CD4-positive, alpha-beta T cell (primary cell): ENCODE measurements at regions of chr22 and their contacts with region 1.

Region 1: DNA sequence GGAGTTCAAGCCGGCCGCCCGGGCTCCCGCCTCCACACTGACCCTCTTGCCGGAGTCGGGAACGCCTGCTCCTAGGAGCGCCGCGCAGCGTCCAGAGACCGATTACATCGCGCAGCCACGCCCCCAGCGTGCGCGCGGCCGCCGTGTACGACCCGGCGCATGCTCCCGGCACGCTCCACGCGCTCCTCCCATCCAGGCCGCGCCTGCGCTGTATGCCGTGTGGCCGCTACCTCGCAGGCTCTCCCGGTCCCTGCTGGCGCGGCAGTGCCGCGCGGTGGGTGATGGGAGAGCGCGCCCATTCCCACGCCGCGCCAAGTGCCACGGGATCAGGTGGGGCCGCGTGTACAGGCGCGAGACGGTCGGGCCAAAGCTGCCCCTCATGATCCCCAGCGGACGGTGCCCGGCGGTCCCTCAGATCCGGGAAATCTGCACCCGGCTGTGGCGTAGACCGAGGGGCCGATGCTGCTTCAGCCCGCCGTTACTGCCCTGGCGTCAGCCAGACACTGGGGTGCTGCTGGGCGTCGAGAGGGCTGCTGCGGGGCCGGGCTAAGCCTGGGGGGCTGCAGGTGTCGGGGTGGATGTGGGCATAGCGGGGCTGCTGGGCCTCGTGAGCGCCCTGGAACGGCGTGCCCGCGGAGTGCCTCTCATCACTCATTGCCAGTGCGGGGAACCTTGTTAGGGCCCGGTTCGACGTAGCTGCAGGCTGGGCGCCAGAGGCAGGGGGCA is at the starts of genes GNB1L and RTL10:
- DNase-seq: peak; percentile 92 to 99 (median 96)
- ATAC-seq: peak; percentile 89
- H3K4me3 ChIP-seq: peak within 1 kb of the TSS; percentile 99
- H3K4me3 Mint-ChIP-seq: peak within 1 kb of the TSS; percentile 95
- H3K27ac ChIP-seq: peak within 1 kb of the TSS; percentile 78 to 90
- H3K27ac Mint-ChIP-seq: peak within 1 kb of the TSS; percentile 96
- H3K4me1 ChIP-seq: peaks cover 58% of the 10 kb centered on the region
- H3K4me1 Mint-ChIP-seq: peaks cover 71% of the 10 kb centered on the region
- H3K27me3 ChIP-seq: no peaks in the 10 kb centered on the region
- H3K27me3 Mint-ChIP-seq: no peaks in the 10 kb centered on the region
- CTCF ChIP-seq: no peak
- total RNA-seq, gene GNB1L: 3.0 to 6.5 TPM
- total RNA-seq, gene RTL10: 24.7 TPM

Region 2: GRCh38 chr22:19820628-19821522 is 34.1 kb before region 1 on chr22:
- CTCF ChIA-PET with region 1: no interaction called
- POLR2A ChIA-PET with region 1: no interaction called
- intact Hi-C with region 1: no loop called
- DNase-seq: peak in 2 of 14 experiments; percentile 11 to 21
- ATAC-seq: no peak
- H3K4me3 ChIP-seq: no peak overlapping the region
- H3K4me3 Mint-ChIP-seq: no peak overlapping the region
- H3K27ac ChIP-seq: no peak overlapping the region
- H3K27ac Mint-ChIP-seq: no peak overlapping the region
- H3K4me1 ChIP-seq: no peaks in the 10 kb centered on the region
- H3K4me1 Mint-ChIP-seq: peaks cover 5% of the 10 kb centered on the region
- H3K27me3 ChIP-seq: no peaks in the 10 kb centered on the region
- H3K27me3 Mint-ChIP-seq: no peaks in the 10 kb centered on the region
- CTCF ChIP-seq: no peak

Region 3: DNA sequence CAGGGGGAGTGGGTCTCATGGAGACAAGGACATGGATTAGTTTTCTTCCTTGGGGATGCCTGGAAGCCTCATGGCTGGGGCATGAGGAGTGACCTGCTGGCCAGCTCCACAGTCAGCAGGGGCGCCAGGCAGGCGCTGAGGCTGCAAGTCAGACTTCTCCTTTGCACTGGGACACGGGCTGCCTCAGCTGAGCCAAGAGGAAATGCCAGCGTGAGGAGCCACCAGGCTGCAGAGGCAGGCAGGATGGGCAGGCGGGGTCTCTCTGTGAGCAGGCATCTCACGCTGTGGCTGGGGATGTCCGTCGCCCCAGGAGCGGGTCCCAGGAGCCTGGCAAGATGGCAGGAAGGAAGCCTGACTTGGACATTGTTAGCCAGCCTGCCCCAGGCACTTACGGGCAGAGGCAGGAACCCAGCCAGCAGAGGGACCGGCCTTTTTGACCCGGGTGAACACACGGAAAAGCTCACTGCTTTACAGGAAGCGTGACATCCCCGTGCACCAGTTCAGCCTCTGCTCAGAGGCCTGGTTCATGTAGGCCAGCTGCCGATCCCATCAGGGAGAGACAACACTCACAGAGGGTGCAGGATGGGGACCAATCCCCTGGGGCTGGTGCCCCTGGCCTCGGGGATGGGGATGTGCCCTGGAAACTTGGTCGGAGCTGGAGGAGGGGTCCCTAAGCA is 10.4 kb before region 1 on chr22:
- CTCF ChIA-PET with region 1: no interaction called
- POLR2A ChIA-PET with region 1: interaction called, 14 read pairs
- intact Hi-C with region 1: no loop called
- DNase-seq: peak in 5 of 14 experiments; percentile 16 to 57 (median 51)
- ATAC-seq: peak; percentile 70
- H3K4me3 ChIP-seq: peak overlapping the region; percentile 30
- H3K4me3 Mint-ChIP-seq: peak overlapping the region; percentile 59
- H3K27ac ChIP-seq: peak overlapping the region in 1 of 2 donors; percentile 22
- H3K27ac Mint-ChIP-seq: peak overlapping the region; percentile 83
- H3K4me1 ChIP-seq: peaks cover 29% of the 10 kb centered on the region
- H3K4me1 Mint-ChIP-seq: peaks cover 31% of the 10 kb centered on the region
- H3K27me3 ChIP-seq: no peaks in the 10 kb centered on the region
- H3K27me3 Mint-ChIP-seq: no peaks in the 10 kb centered on the region
- CTCF ChIP-seq: no peak

Region 4: DNA sequence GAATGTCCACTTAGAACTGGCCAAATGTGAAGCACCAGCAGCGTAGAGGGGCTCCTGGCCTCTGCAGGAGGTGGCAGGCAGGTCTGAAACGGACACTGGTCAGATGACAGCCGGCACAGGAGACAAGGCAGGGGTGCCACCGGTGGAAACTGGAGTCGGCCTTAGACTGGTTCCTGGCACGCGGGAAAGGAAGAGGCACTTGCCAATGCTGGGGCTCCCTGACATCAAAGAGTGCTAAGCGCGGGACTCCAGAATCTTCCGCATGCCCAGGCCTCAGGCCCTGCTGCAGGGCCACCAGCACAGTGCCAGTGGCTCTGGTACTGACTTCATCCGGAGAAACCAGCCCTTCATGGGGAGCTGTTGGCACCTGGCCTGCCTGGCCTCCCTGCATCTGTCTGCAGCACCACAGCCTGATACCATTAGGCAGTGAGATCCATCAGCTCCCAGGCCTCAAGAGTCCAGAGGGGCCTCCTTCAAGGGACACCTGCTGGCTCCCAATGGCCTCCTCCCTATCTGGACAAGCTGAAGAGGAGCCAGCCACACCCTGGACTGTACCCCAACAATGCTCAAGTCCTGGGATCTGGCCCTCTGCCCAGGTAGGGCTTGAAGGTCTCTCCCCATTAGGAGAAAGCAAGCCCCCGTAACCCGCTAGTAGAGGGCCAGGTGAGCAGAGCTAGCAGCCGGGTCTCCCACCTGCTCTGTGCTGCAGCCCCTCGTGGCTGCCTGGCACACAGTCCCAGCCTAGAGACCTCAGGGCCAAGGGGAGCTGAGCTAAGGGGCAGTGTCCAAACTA is 29.4 kb after region 1 on chr22:
- CTCF ChIA-PET with region 1: interaction called, 10 read pairs
- POLR2A ChIA-PET with region 1: interaction called, 32 read pairs
- intact Hi-C with region 1: loop called in 1 of 2 experiments (anchors 1 kb)
- DNase-seq: peak in 3 of 14 experiments; percentile 9 to 33 (median 28)
- ATAC-seq: no peak
- H3K4me3 ChIP-seq: no peak overlapping the region
- H3K4me3 Mint-ChIP-seq: no peak overlapping the region
- H3K27ac ChIP-seq: peak overlapping the region; percentile 35 to 90
- H3K27ac Mint-ChIP-seq: peak overlapping the region; percentile 97
- H3K4me1 ChIP-seq: peaks cover 64% of the 10 kb centered on the region
- H3K4me1 Mint-ChIP-seq: peaks cover 41% of the 10 kb centered on the region
- H3K27me3 ChIP-seq: no peaks in the 10 kb centered on the region
- H3K27me3 Mint-ChIP-seq: no peaks in the 10 kb centered on the region
- CTCF ChIP-seq: no peak

Region 5: GRCh38 chr22:19896665-19897355 is 41.9 kb after region 1 on chr22:
- CTCF ChIA-PET with region 1: interaction called, 3 read pairs
- POLR2A ChIA-PET with region 1: interaction called, 92 read pairs
- intact Hi-C with region 1: no loop called
- DNase-seq: peak in 11 of 14 experiments; percentile 24 to 73 (median 48)
- ATAC-seq: peak; percentile 24
- H3K4me3 ChIP-seq: no peak overlapping the region
- H3K4me3 Mint-ChIP-seq: peak overlapping the region; percentile 45
- H3K27ac ChIP-seq: no peak overlapping the region
- H3K27ac Mint-ChIP-seq: peak overlapping the region; percentile 97
- H3K4me1 ChIP-seq: peaks cover 59% of the 10 kb centered on the region
- H3K4me1 Mint-ChIP-seq: peaks cover 53% of the 10 kb centered on the region
- H3K27me3 ChIP-seq: no peaks in the 10 kb centered on the region
- H3K27me3 Mint-ChIP-seq: no peaks in the 10 kb centered on the region
- CTCF ChIP-seq: peak; percentile 34

Region 6: DNA sequence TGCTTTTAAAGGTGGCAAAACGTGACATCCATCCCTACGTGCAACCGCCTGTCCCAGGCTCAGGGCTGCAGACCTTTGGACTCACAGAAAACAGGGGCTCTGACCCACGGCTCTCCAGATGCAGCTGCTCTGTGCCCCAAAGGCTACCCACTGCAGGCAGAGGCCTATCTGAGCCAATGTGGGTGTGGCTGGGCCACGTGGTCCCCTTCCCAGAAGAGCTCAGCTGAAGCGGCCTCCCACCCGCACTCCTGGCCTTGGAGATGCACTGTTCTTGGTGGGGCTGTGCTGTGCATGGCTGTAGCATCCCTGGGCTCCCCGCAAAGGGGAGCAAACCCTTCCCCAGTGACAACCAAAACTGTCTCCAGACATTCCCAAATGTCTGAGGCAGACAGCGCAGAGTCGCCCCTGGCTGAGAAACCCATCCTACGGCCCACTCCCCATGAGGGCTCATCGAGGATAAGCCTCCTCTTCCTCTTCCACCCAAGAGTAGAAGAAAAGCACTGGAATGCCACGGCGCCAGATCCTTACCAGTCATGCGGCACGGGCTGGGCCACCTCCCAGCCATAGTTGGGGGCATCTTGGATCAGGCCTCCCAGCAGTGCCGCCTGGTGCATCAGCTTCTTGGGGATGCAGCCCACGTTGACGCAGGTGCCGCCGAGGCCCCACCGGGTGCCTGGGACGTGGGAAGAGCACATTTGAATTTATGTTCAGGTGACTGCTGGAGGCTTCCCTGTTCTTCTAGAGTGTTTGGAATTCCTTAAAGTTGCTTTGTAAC is 63.6 kb after region 1 on chr22:
- CTCF ChIA-PET with region 1: no interaction called
- POLR2A ChIA-PET with region 1: no interaction called
- intact Hi-C with region 1: no loop called
- DNase-seq: no peak
- ATAC-seq: no peak
- H3K4me3 ChIP-seq: no peak overlapping the region
- H3K4me3 Mint-ChIP-seq: no peak overlapping the region
- H3K27ac ChIP-seq: no peak overlapping the region
- H3K27ac Mint-ChIP-seq: no peak overlapping the region
- H3K4me1 ChIP-seq: no peaks in the 10 kb centered on the region
- H3K4me1 Mint-ChIP-seq: peaks cover 4% of the 10 kb centered on the region
- H3K27me3 ChIP-seq: no peaks in the 10 kb centered on the region
- H3K27me3 Mint-ChIP-seq: no peaks in the 10 kb centered on the region
- CTCF ChIP-seq: no peak

Region 7: GRCh38 chr22:20000624-20001314 is 145.8 kb after region 1 on chr22:
- CTCF ChIA-PET with region 1: no interaction called
- POLR2A ChIA-PET with region 1: no interaction called
- intact Hi-C with region 1: no loop called
- DNase-seq: no peak
- ATAC-seq: no peak
- H3K4me3 ChIP-seq: no peak overlapping the region
- H3K4me3 Mint-ChIP-seq: no peak overlapping the region
- H3K27ac ChIP-seq: no peak overlapping the region
- H3K27ac Mint-ChIP-seq: no peak overlapping the region
- H3K4me1 ChIP-seq: no peaks in the 10 kb centered on the region
- H3K4me1 Mint-ChIP-seq: no peaks in the 10 kb centered on the region
- H3K27me3 ChIP-seq: no peaks in the 10 kb centered on the region
- H3K27me3 Mint-ChIP-seq: no peaks in the 10 kb centered on the region
- CTCF ChIP-seq: no peak

Region 8: GRCh38 chr22:20174785-20175596 is 320.1 kb after region 1 on chr22:
- CTCF ChIA-PET with region 1: no interaction called
- POLR2A ChIA-PET with region 1: no interaction called
- intact Hi-C with region 1: no loop called
- DNase-seq: no peak
- ATAC-seq: no peak
- H3K4me3 ChIP-seq: no peak overlapping the region
- H3K4me3 Mint-ChIP-seq: no peak overlapping the region
- H3K27ac ChIP-seq: no peak overlapping the region
- H3K27ac Mint-ChIP-seq: no peak overlapping the region
- H3K4me1 ChIP-seq: no peaks in the 10 kb centered on the region
- H3K4me1 Mint-ChIP-seq: no peaks in the 10 kb centered on the region
- H3K27me3 ChIP-seq: no peaks in the 10 kb centered on the region
- H3K27me3 Mint-ChIP-seq: no peaks in the 10 kb centered on the region
- CTCF ChIP-seq: no peak